ENCODE measurements at regions of chr20 and their contacts with region 1.

Region 1: DNA sequence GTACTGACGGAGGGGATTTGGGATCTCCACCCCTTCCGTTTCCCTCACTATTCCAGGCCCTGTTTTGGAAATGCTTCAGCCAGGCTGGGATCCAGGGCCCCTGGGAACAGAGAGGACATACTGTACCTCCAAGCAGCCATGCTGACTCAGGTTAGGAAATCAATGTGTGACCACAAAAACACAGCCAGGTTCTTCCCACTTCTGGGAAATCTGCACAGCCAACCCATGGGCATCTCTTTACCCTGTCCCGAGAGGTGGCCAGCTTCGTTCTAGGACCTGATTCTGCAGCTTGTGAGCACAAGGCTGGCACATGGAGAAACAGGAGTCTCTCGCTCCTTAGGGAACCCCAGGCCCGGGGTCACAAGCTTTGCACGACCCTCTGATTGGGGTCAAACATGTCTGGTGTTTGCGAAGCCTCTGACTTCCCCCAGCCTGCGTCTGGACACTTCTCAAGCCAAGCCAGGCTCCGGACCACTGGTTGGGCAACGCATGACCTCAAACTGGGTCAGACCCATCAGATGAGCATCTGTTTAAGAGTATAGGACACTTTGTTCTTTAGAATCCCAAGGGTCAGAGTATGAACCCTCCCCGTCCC is 8.3 kb upstream of the TTPAL start:
- DNase-seq: peak; percentile 64
- ATAC-seq: peak; percentile 76

Region 2: GRCh38 chr20:44394702-44395460 is 72.5 kb before region 1 on chr20:
- intact Hi-C with region 1: loop called (anchors 5 kb)
- DNase-seq: no peak
- ATAC-seq: peak; percentile 31